Activated naive CD4-positive, alpha-beta T cell treated with anti-CD3 and anti-CD28 coated beads for 36 hours (primary cell): ENCODE measurements at regions of chr6 and their contacts with region 1.

Region 1: DNA sequence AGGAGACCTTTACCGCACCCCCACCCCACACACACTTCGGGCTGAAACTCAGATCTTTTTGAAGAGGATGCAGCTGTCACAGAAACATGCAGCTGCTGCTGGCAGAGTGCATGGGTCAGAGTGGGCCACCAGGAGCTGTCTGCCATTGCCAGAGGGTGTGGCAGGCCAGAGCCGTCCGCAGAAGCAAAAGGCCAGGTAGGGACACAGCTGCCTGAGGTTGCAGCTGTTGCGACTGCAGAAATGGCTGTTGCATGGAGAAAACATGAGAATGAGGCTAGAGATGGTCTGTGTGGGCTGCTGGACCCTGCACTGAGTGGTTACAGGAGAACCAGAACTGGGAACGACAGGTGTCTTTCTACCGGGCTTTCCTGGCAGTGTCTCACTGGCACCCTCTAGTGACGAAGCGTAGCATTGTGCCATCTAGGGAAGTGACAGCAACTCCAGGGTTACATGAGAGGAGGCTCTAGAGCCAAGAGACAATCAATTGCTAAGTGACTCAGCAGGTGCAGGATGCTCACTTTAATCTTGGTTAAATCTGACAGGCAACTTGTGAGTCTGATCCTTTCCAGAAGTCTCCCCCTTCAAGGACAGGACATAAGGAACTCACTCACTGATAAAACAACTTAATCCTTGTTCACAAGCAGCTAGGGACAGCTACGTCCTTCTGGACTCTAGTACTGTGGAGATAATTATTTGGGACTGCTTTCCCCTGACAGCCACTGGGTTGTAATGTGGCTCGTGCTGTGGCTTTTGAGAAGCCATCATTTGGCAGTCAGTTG is 29.1 kb upstream of the SERPINB9 start:
- DNase-seq: peak; percentile 96
- H3K4me3 Mint-ChIP-seq: peak overlapping the region; percentile 47
- H3K27ac Mint-ChIP-seq: peak overlapping the region; percentile 52
- H3K4me1 Mint-ChIP-seq: peaks cover 22% of the 10 kb centered on the region
- H3K27me3 Mint-ChIP-seq: no peaks in the 10 kb centered on the region

Region 2: DNA sequence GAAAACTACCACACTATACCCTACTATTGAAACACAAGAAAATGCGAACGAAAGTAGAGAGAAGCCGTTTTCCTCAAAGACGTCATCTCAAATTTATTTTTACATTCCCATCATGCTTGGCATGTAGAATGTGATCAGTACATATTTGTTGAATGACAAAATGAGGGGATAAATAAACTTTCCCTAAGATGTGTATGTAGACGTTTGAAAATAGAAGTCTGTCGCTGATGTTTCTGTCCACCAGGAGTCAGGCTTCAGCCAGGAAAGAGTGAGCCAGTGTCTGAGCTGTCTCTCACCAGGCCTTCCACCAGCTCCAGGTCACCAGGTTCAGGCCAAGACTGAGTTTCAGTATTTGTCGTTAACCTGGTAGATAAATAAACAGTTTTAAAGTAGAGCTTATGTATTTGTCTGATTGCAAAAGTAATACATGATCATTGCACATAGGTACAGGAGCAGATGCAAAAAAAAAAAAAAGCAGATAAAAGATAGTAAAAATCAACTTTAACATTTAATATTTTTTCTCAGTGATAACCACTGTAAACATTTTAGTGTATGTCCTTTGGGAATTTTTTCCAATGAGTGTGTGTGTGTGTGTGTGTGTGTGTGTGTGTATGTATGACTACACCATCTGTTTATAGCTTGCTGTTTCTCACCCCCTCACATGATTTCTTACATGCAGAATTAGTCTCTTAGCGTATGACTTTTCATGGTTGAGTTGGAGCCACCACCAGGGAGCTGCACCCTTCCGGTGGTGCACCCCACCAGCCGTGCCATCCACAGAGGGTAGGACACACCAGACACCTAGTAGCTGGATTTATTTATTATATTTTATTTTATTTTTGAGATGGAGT is 140.8 kb before region 1 on chr6:
- CTCF ChIA-PET with region 1: interaction called, 27 read pairs
- intact Hi-C with region 1: loop called (anchors 1 kb)
- DNase-seq: peak; percentile 87
- H3K4me3 Mint-ChIP-seq: no peak overlapping the region
- H3K27ac Mint-ChIP-seq: no peak overlapping the region
- H3K4me1 Mint-ChIP-seq: peaks cover 39% of the 10 kb centered on the region
- H3K27me3 Mint-ChIP-seq: no peaks in the 10 kb centered on the region

Region 3: GRCh38 chr6:2802521-2803060 is 129.6 kb before region 1 on chr6:
- CTCF ChIA-PET with region 1: no interaction called
- intact Hi-C with region 1: no loop called
- DNase-seq: no peak
- H3K4me3 Mint-ChIP-seq: no peak overlapping the region
- H3K27ac Mint-ChIP-seq: no peak overlapping the region
- H3K4me1 Mint-ChIP-seq: peaks cover 14% of the 10 kb centered on the region
- H3K27me3 Mint-ChIP-seq: no peaks in the 10 kb centered on the region

Region 4: GRCh38 chr6:2841264-2842138 is 90.7 kb before region 1 on chr6 and contains the start of gene SERPINB1:
- CTCF ChIA-PET with region 1: interaction called, 177 read pairs
- intact Hi-C with region 1: loop called (anchors 1 kb)
- DNase-seq: peak; percentile 94
- H3K4me3 Mint-ChIP-seq: peak within 1 kb of the TSS; percentile 81
- H3K27ac Mint-ChIP-seq: peak within 1 kb of the TSS; percentile 87
- H3K4me1 Mint-ChIP-seq: peaks cover 61% of the 10 kb centered on the region
- H3K27me3 Mint-ChIP-seq: no peaks in the 10 kb centered on the region
- total RNA-seq, gene SERPINB1: 200 to 208 TPM

Region 5: DNA sequence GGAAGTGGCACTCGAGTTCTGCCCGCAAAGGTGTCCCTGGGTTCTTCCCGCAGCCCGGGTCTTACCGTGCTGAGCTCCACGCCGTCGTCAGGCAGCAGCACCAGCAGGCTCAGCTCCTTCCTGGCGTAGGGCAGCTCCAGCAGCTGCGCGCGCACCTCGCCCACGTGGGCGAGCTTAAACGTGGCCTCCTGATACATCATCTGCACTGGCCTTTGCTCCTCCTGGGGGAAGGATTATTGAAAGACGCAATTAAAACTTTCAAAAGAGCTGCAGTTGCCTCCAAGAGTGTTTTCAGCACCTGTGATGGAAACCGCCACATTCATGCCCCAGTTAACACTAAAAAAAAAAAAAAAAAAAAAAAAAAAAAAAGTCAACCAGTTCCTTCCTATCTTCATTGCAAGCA is 40.4 kb before region 1 on chr6:
- CTCF ChIA-PET with region 1: interaction called, 5 read pairs
- intact Hi-C with region 1: loop called (anchors 1 kb)
- DNase-seq: peak; percentile 85
- H3K4me3 Mint-ChIP-seq: peak overlapping the region; percentile 75
- H3K27ac Mint-ChIP-seq: peak overlapping the region; percentile 88
- H3K4me1 Mint-ChIP-seq: peaks cover 71% of the 10 kb centered on the region
- H3K27me3 Mint-ChIP-seq: no peaks in the 10 kb centered on the region

Region 6: GRCh38 chr6:2900821-2901644 is 31.1 kb before region 1 on chr6:
- CTCF ChIA-PET with region 1: interaction called, 16 read pairs
- intact Hi-C with region 1: no loop called
- DNase-seq: no peak
- H3K4me3 Mint-ChIP-seq: peak overlapping the region; percentile 99
- H3K27ac Mint-ChIP-seq: peak overlapping the region; percentile 96
- H3K4me1 Mint-ChIP-seq: peaks cover 52% of the 10 kb centered on the region
- H3K27me3 Mint-ChIP-seq: no peaks in the 10 kb centered on the region

Region 7: GRCh38 chr6:2911171-2911570 is 21.0 kb before region 1 on chr6:
- CTCF ChIA-PET with region 1: interaction called, 31 read pairs
- intact Hi-C with region 1: loop called (anchors 2 kb)
- DNase-seq: no peak
- H3K4me3 Mint-ChIP-seq: no peak overlapping the region
- H3K27ac Mint-ChIP-seq: no peak overlapping the region
- H3K4me1 Mint-ChIP-seq: peaks cover 43% of the 10 kb centered on the region
- H3K27me3 Mint-ChIP-seq: no peaks in the 10 kb centered on the region

Region 8: DNA sequence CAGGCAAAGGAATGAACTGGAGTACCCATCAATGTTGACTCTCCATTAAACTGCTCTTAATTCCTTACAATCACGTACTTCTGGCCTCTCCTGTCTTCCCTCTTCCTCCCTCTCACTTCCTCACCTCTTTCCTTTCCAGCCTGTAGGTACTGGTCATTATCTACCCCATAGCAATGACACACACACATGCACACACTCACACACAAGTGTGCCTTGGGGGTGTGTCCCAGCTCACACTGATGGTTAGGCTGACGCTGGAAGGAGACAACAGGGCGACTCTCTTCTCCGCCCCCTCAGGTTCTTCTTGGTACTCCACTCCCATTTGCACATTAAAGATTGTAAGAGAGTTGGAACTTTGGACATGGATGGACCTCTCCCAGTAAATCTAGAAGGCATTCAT is 15.1 kb before region 1 on chr6:
- CTCF ChIA-PET with region 1: interaction called, 31 read pairs
- intact Hi-C with region 1: no loop called
- DNase-seq: no peak
- H3K4me3 Mint-ChIP-seq: no peak overlapping the region
- H3K27ac Mint-ChIP-seq: no peak overlapping the region
- H3K4me1 Mint-ChIP-seq: peaks cover 13% of the 10 kb centered on the region
- H3K27me3 Mint-ChIP-seq: no peaks in the 10 kb centered on the region